Transverse colon (tissue), 4 donors: ENCODE measurements at regions of chr4 and their contacts with region 1.

Region 1: GRCh38 chr4:57602141-57602540 is 492.0 kb upstream of the IGFBP7 start:
- DNase-seq: no peak
- H3K4me3 ChIP-seq: no peak overlapping the region
- H3K27ac ChIP-seq: no peak overlapping the region
- H3K4me1 ChIP-seq: no peaks in the 10 kb centered on the region
- H3K27me3 ChIP-seq: no peaks in the 10 kb centered on the region
- CTCF ChIP-seq: no peak
- EP300 ChIP-seq: no peak
- POLR2A ChIP-seq: no peak

Region 2: GRCh38 chr4:56026596-56026995 is 1575.5 kb before region 1 on chr4:
- in situ Hi-C with region 1: no loop called
- intact Hi-C with region 1: loop called (anchors 5 kb)
- DNase-seq: no peak
- H3K4me3 ChIP-seq: no peak overlapping the region
- H3K27ac ChIP-seq: no peak overlapping the region
- H3K4me1 ChIP-seq: no peaks in the 10 kb centered on the region
- H3K27me3 ChIP-seq: no peaks in the 10 kb centered on the region
- CTCF ChIP-seq: no peak
- EP300 ChIP-seq: no peak
- POLR2A ChIP-seq: no peak

Region 3: DNA sequence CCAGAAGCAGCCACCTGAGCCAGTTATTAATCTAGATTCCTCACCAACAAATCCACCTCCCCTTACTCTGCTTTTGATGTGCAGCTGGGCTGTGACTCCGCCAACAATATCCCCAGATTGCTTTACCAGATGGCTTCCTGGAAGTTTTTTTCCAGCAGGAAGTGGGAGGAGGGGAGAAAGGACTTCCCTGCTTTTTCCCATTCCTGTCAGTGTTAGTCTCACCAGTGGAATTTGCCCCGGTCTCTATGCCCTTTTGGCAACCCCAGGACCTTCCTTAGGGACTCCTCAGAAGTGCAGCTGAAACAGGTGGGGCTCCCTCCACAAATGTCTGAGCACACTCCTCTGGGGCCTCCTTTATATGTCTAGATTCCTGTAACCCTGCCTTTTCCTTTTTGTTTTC is 26.7 kb before region 1 on chr4:
- in situ Hi-C with region 1: no loop called
- intact Hi-C with region 1: no loop called
- DNase-seq: no peak
- H3K4me3 ChIP-seq: no peak overlapping the region
- H3K27ac ChIP-seq: no peak overlapping the region
- H3K4me1 ChIP-seq: no peaks in the 10 kb centered on the region
- H3K27me3 ChIP-seq: no peaks in the 10 kb centered on the region
- CTCF ChIP-seq: no peak
- EP300 ChIP-seq: no peak
- POLR2A ChIP-seq: no peak

Region 4: GRCh38 chr4:57588557-57588956 is 13.6 kb before region 1 on chr4:
- in situ Hi-C with region 1: no loop called
- intact Hi-C with region 1: loop called (anchors 1 kb)
- DNase-seq: no peak
- H3K4me3 ChIP-seq: no peak overlapping the region
- H3K27ac ChIP-seq: no peak overlapping the region
- H3K4me1 ChIP-seq: no peaks in the 10 kb centered on the region
- H3K27me3 ChIP-seq: no peaks in the 10 kb centered on the region
- CTCF ChIP-seq: no peak
- EP300 ChIP-seq: no peak
- POLR2A ChIP-seq: no peak